Prostate gland (tissue), 2 donors: ENCODE measurements at regions of chr2 and their contacts with region 1.

Region 1: GRCh38 chr2:47323009-47323821 is 79.7 kb upstream of the MSH2 start:
- DNase-seq: peak; percentile 54
- H3K4me3 ChIP-seq: no peak overlapping the region
- H3K27ac ChIP-seq: no peak overlapping the region
- H3K4me1 ChIP-seq: no peaks in the 10 kb centered on the region
- H3K27me3 ChIP-seq: no peaks in the 10 kb centered on the region
- CTCF ChIP-seq: peak; percentile 88 to 98 (median 96)
- POLR2A ChIP-seq: no peak

Region 2: GRCh38 chr2:46917628-46918027 is 405.6 kb before region 1 on chr2:
- intact Hi-C with region 1: loop called (anchors 2 kb)
- DNase-seq: no peak
- H3K4me3 ChIP-seq: no peak overlapping the region
- H3K27ac ChIP-seq: no peak overlapping the region
- H3K4me1 ChIP-seq: peaks cover 12% of the 10 kb centered on the region
- H3K27me3 ChIP-seq: no peaks in the 10 kb centered on the region
- CTCF ChIP-seq: no peak
- POLR2A ChIP-seq: no peak

Region 3: GRCh38 chr2:47272031-47272864 is 51.0 kb before region 1 on chr2:
- intact Hi-C with region 1: loop called (anchors 5 kb)
- DNase-seq: peak; percentile 33
- H3K4me3 ChIP-seq: peak overlapping the region; percentile 8 to 10
- H3K27ac ChIP-seq: peak overlapping the region in 1 of 2 donors; percentile 10
- H3K4me1 ChIP-seq: no peaks in the 10 kb centered on the region
- H3K27me3 ChIP-seq: no peaks in the 10 kb centered on the region
- CTCF ChIP-seq: peak; percentile 94 to 97 (median 96)
- POLR2A ChIP-seq: no peak